ENCODE measurements at regions of chr2 and their contacts with region 1.

Region 1: GRCh38 chr2:160141912-160142311 is 58.2 kb downstream of the ITGB6 start:
- DNase-seq: no peak
- ATAC-seq: no peak
- H3K4me3 ChIP-seq: no peak overlapping the region
- H3K27ac ChIP-seq: peak overlapping the region in 3 of 4 donors; percentile 24 to 73 (median 69)
- H3K4me1 ChIP-seq: peaks cover 0 to 7% of the 10 kb centered on the region in 2 donors
- H3K27me3 ChIP-seq: no peaks in the 10 kb centered on the region
- CTCF ChIP-seq: no peak
- POLR2A ChIP-seq: no peak

Region 2: DNA sequence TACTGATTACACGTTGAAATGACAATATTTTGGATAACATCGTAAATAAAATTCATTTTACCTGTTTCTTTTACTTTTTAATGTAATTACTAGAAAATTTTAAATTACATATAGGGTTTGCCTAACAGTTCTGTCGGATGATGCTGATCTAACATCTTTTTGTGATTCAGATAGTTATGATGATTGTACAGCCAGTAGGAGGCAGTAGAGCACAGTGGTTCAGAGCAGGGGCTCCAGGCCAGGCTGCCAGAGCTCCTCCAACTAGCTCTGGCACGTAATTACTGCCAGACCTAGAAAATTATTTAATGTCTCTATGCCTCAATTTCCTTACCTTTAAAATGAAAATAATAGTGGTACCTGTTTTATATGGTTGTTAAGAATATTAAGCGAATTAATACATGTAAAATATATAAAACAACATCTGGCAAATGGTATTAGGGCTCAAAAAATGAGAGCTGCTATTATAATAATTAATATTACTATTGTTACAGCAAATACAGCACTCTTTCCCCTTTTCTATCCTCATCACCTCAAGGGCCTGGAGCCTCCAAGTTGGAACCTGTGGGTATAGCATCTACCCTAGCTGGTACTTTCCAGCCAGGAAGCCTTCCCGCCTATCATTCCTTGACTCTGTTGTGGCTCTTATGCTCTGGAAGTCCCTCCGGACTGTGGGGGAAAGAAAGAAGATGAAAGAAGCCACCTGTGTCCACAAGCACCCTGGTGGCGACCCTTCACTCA is 31.8 kb before region 1 on chr2:
- in situ Hi-C with region 1: no loop called
- intact Hi-C with region 1: no loop called
- DNase-seq: peak; percentile 28 to 62
- ATAC-seq: peak; percentile 88 to 97
- H3K4me3 ChIP-seq: no peak overlapping the region
- H3K27ac ChIP-seq: peak overlapping the region in 2 of 4 donors; percentile 6 to 44
- H3K4me1 ChIP-seq: no peaks in the 10 kb centered on the region
- H3K27me3 ChIP-seq: no peaks in the 10 kb centered on the region
- CTCF ChIP-seq: peak; percentile 65 to 86 (median 75)
- POLR2A ChIP-seq: no peak

Region 3: GRCh38 chr2:160157861-160158829 is 16.2 kb after region 1 on chr2:
- in situ Hi-C with region 1: no loop called
- intact Hi-C with region 1: loop called (anchors 2 kb)
- DNase-seq: no peak
- ATAC-seq: peak in 1 of 2 donors; percentile 63
- H3K4me3 ChIP-seq: peak overlapping the region in 1 of 4 donors; percentile 5
- H3K27ac ChIP-seq: peak overlapping the region; percentile 21 to 68 (median 34)
- H3K4me1 ChIP-seq: peaks cover 0 to 12% of the 10 kb centered on the region in 2 donors
- H3K27me3 ChIP-seq: no peaks in the 10 kb centered on the region
- CTCF ChIP-seq: no peak
- POLR2A ChIP-seq: no peak

Region 4: DNA sequence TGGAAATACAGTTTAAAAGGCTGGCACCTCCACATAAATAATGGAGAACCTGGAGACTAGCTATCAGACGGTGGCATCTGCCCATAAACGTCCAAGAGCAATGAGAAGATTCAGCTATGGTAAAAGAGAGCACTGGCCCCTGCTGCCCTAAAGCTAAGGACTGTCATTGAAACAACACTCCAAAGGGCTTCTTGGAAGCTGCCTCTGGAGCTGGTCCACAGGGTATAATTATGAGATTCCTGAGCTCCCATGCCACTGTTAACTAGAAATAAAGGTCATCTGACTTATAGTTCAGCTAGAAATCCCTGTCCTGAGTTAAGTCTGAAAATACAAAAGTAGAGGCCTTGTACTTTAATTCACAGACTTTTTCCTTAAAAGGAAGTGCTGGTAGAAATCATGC is 391.6 kb after region 1 on chr2:
- in situ Hi-C with region 1: no loop called
- intact Hi-C with region 1: no loop called
- DNase-seq: no peak
- ATAC-seq: no peak
- H3K4me3 ChIP-seq: no peak overlapping the region
- H3K27ac ChIP-seq: no peak overlapping the region
- H3K4me1 ChIP-seq: peaks cover 8 to 11% of the 10 kb centered on the region in 2 donors
- H3K27me3 ChIP-seq: no peaks in the 10 kb centered on the region
- CTCF ChIP-seq: no peak
- POLR2A ChIP-seq: no peak

Measured in gastrocnemius medialis (tissue), 4 donors.